ENCODE measurements at regions of chr2 and their contacts with region 1.

Region 1: DNA sequence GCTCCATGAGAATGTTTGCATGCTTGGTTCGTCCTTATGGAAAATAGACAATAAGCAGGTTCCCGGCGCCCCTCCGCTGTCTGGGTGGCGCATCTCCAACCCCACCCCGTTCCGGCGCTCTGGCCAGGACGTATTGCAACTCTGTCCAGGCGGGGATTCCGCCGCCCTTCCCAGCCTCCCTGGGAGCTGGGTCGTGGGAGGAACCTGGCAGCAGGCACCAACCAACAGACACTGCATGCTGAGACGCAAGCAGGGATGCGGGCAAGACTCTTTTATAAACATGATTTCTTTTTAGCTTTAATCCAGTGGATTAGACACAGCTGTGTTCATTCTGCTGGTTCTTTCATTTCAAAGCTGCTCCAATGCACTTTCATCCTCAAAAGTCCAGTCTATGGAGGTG is 240.2 kb downstream of the SH3BP4 start:
- DNase-seq: no peak
- H3K4me3 ChIP-seq: peak overlapping the region in 2 of 3 experiments; percentile 4 to 6
- H3K27ac ChIP-seq: no peak overlapping the region
- H3K4me1 ChIP-seq: no peaks in the 10 kb centered on the region
- H3K27me3 ChIP-seq: peaks cover 8% of the 10 kb centered on the region
- CTCF ChIP-seq: no peak

Region 2: GRCh38 chr2:235162081-235162836 is 29.7 kb before region 1 on chr2:
- CTCF ChIA-PET with region 1: no interaction called
- dilution Hi-C with region 1: no loop called
- in situ Hi-C with region 1: no loop called
- intact Hi-C with region 1: no loop called
- DNase-seq: no peak
- H3K4me3 ChIP-seq: no peak overlapping the region
- H3K27ac ChIP-seq: no peak overlapping the region
- H3K4me1 ChIP-seq: no peaks in the 10 kb centered on the region
- H3K27me3 ChIP-seq: peaks cover 4% of the 10 kb centered on the region
- CTCF ChIP-seq: no peak

Region 3: DNA sequence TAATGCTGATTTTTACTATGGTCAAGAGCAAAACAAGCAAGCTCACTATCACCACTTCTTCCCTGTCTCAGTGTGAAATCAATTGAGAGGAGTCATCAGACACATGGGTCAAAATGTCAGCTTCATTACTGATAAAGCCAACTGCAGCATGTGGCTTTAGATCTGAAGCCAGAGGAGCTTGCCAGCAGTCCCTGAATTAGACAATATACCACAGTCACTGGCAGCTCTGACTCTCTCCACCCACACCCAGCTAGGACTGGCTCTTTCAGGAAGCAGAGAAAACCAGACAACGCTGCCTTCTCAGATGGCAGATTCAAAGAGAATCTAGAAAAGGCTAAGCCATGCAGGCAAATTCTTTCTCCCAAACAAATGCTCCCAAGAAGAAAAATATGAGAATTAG is 1092.2 kb after region 1 on chr2:
- CTCF ChIA-PET with region 1: interaction called, 19 read pairs
- dilution Hi-C with region 1: no loop called
- in situ Hi-C with region 1: no loop called
- intact Hi-C with region 1: no loop called
- DNase-seq: no peak
- H3K4me3 ChIP-seq: no peak overlapping the region
- H3K27ac ChIP-seq: no peak overlapping the region
- H3K4me1 ChIP-seq: no peaks in the 10 kb centered on the region
- H3K27me3 ChIP-seq: peaks cover 2% of the 10 kb centered on the region
- CTCF ChIP-seq: no peak